ENCODE measurements at regions of chr5 and their contacts with region 1.

Region 1: GRCh38 chr5:51398875-51399642 is 15.8 kb downstream of the ISL1 start:
- DNase-seq: peak; percentile 79
- H3K4me3 ChIP-seq: peak overlapping the region; percentile 38 to 50
- H3K27ac ChIP-seq: peak overlapping the region; percentile 85 to 100
- H3K4me1 ChIP-seq: peaks cover 5 to 56% of the 10 kb centered on the region in 2 experiments; a peak in 3 of 4 replicates
- H3K27me3 ChIP-seq: no peaks in the 10 kb centered on the region
- CTCF ChIP-seq: no peak
- EP300 ChIP-seq: no peak
- RAD21 ChIP-seq: 0 out of 2 replicates have a peak, but pooled peaks have one; percentile 13

Region 2: GRCh38 chr5:51829691-51830090 is 430.6 kb after region 1 on chr5:
- CTCF ChIA-PET with region 1: no interaction called
- POLR2A ChIA-PET with region 1: no interaction called
- DNase-seq: no peak
- H3K4me3 ChIP-seq: no peak overlapping the region
- H3K27ac ChIP-seq: peak overlapping the region in 1 of 2 experiments; percentile 69; a peak in 2 of 4 replicates
- H3K4me1 ChIP-seq: peaks cover 0 to 7% of the 10 kb centered on the region in 2 experiments; a peak in 1 of 4 replicates
- H3K27me3 ChIP-seq: no peaks in the 10 kb centered on the region
- CTCF ChIP-seq: no peak
- EP300 ChIP-seq: no peak
- RAD21 ChIP-seq: no peak

Region 3: DNA sequence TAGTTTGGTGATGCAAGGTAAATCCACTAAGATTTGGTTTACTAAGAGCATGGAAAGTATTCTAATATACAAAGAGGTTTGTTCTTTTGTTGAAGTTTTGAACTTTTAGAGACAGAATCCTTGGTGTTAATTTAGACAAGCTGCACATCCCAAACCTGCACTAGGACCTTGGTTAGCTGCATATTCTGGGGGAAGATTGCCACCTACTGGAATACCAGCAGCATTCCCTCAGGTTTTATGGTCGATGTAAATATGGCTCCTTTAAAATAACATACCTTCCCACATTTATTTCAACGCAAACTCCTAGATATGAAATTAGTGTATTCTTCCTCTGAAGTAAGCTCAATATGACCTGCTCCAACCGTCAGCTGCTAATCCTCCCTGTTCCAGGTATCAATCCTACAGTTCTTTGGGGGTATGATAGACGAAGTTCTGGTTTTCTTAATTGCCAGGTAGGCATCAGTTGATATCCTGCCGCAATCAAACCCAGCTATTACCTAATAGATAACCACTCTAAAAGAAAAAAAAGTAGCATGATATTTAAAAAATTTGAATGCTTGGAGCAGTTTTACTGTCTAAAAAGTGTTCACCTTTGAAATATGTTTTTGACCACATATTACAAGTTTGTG is 608.3 kb after region 1 on chr5:
- CTCF ChIA-PET with region 1: interaction called, 12 read pairs
- POLR2A ChIA-PET with region 1: no interaction called
- DNase-seq: peak; percentile 44
- H3K4me3 ChIP-seq: peak overlapping the region in 1 of 2 experiments; percentile 21; a peak in 1 of 4 replicates
- H3K27ac ChIP-seq: peak overlapping the region in 1 of 2 experiments; percentile 94; a peak in 2 of 4 replicates
- H3K4me1 ChIP-seq: peaks cover 0 to 3% of the 10 kb centered on the region in 2 experiments; a peak in 1 of 4 replicates
- H3K27me3 ChIP-seq: no peaks in the 10 kb centered on the region
- CTCF ChIP-seq: peak; percentile 89
- EP300 ChIP-seq: 0 out of 4 replicates have a peak, but pooled peaks of 1 of the 2 experiments have one; percentile 23
- RAD21 ChIP-seq: peak; percentile 98

Region 4: DNA sequence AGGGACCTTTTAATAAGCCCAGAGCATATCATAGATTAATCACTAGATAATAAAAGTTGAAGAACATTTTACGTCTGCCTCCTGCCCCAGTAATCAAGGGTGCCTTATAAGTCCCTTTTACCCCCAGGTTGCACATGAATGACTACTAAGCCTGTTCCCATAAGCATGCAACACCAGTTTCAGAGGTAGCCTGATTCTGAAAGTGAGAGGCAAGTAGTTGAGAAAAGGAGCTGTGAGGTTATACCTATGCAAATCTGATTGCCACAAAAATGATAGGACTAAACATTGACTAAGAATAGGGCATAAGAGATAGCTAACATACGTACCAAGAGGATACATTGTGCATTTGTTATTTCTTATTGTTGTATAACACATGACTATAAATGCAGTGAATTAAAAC is 666.1 kb after region 1 on chr5:
- CTCF ChIA-PET with region 1: no interaction called
- POLR2A ChIA-PET with region 1: no interaction called
- DNase-seq: no peak
- H3K4me3 ChIP-seq: no peak overlapping the region
- H3K27ac ChIP-seq: no peak overlapping the region
- H3K4me1 ChIP-seq: no peaks in the 10 kb centered on the region
- H3K27me3 ChIP-seq: no peaks in the 10 kb centered on the region
- CTCF ChIP-seq: no peak
- EP300 ChIP-seq: no peak
- RAD21 ChIP-seq: no peak

Measured in SK-N-SH (cell line).